ENCODE measurements at regions of chr22 and their contacts with region 1.

Region 1: GRCh38 chr22:37561212-37562048 is 1.1 kb downstream of the CDC42EP1 start:
- DNase-seq: peak; percentile 92
- ATAC-seq: peak; percentile 71
- H3K4me3 Mint-ChIP-seq: peak overlapping the region; percentile 57
- H3K27ac Mint-ChIP-seq: peak overlapping the region; percentile 51
- H3K4me1 Mint-ChIP-seq: peaks cover 20% of the 10 kb centered on the region
- H3K27me3 Mint-ChIP-seq: peaks cover 45% of the 10 kb centered on the region

Region 2: GRCh38 chr22:37538590-37539357 is 22.7 kb before region 1 on chr22:
- CTCF ChIA-PET with region 1: interaction called, 302 read pairs
- POLR2A ChIA-PET with region 1: interaction called, 16 read pairs
- intact Hi-C with region 1: loop called in 1 of 2 experiments (anchors 1 kb)
- DNase-seq: peak; percentile 97
- ATAC-seq: peak; percentile 92
- H3K4me3 Mint-ChIP-seq: no peak overlapping the region
- H3K27ac Mint-ChIP-seq: peak overlapping the region; percentile 55
- H3K4me1 Mint-ChIP-seq: peaks cover 39% of the 10 kb centered on the region
- H3K27me3 Mint-ChIP-seq: peaks cover 12% of the 10 kb centered on the region

Region 3: DNA sequence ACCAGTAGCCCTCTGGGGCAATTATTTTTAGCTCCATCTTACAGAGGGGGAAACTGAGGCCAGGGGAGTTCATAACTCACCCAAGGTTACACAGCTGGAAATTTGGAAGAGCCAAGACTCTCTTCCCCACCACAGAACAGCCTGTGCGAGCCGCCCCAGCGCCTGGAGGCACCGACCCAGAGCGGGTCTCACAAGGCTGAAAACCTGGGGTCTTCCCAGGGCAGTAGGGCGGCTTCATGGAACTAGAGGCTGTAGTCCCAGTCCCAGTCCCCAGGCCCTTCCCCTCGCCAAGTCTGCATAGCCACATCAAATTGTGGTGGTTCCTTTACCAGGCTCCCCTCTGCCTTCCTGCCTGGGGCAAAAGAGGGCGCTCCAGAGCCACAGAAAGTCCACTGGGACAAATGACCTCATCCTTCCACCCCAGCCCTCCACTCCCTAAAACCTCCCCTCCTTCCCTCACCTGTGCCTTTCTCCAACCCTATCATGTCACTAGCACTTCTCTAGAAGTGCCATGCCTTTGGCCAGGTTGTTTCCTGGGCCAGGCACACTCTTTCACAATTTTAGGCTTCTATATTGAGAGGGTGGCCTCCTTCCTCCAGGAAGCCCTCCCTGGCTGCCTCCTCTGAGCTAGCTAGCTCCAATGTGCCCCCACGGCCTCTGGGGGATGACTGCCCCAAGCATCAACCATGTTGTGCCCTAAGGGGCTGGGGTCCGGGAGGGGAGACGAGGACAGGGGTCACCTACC is 16.3 kb before region 1 on chr22:
- CTCF ChIA-PET with region 1: interaction called, 302 read pairs
- POLR2A ChIA-PET with region 1: interaction called, 16 read pairs
- intact Hi-C with region 1: no loop called
- DNase-seq: peak; percentile 84
- ATAC-seq: peak; percentile 54
- H3K4me3 Mint-ChIP-seq: no peak overlapping the region
- H3K27ac Mint-ChIP-seq: no peak overlapping the region
- H3K4me1 Mint-ChIP-seq: peaks cover 26% of the 10 kb centered on the region
- H3K27me3 Mint-ChIP-seq: peaks cover 8% of the 10 kb centered on the region

Measured in activated CD4-positive, alpha-beta T cell treated with anti-CD3 and anti-CD28 coated beads for 36 hours (primary cell).